Upper lobe of right lung (tissue), 1 donor: ENCODE measurements at regions of chr3 and their contacts with region 1.

Region 1: GRCh38 chr3:45499529-45499928 is 95.0 kb upstream of the LIMD1 start:
- DNase-seq: no peak
- ATAC-seq: no peak
- H3K4me3 ChIP-seq: no peak overlapping the region
- H3K27ac ChIP-seq: no peak overlapping the region
- H3K4me1 ChIP-seq: no peaks in the 10 kb centered on the region
- H3K27me3 ChIP-seq: no peaks in the 10 kb centered on the region
- CTCF ChIP-seq: peak; percentile 63

Region 2: GRCh38 chr3:45037734-45038455 is 461.6 kb before region 1 on chr3:
- intact Hi-C with region 1: loop called (anchors 10 kb)
- DNase-seq: peak; percentile 92
- ATAC-seq: peak; percentile 92
- H3K4me3 ChIP-seq: no peak overlapping the region
- H3K27ac ChIP-seq: no peak overlapping the region
- H3K4me1 ChIP-seq: peaks cover 42% of the 10 kb centered on the region
- H3K27me3 ChIP-seq: no peaks in the 10 kb centered on the region
- CTCF ChIP-seq: peak; percentile 94

Region 3: GRCh38 chr3:45224824-45225464 is 274.6 kb before region 1 on chr3:
- intact Hi-C with region 1: loop called (anchors 10 kb)
- DNase-seq: peak; percentile 91
- ATAC-seq: peak; percentile 91
- H3K4me3 ChIP-seq: peak overlapping the region; percentile 36
- H3K27ac ChIP-seq: no peak overlapping the region
- H3K4me1 ChIP-seq: peaks cover 6% of the 10 kb centered on the region
- H3K27me3 ChIP-seq: peaks cover 48% of the 10 kb centered on the region
- CTCF ChIP-seq: peak; percentile 52